Left ventricle myocardium inferior (tissue), 1 donor: ENCODE measurements at regions of chr10 and their contacts with region 1.

Region 1: DNA sequence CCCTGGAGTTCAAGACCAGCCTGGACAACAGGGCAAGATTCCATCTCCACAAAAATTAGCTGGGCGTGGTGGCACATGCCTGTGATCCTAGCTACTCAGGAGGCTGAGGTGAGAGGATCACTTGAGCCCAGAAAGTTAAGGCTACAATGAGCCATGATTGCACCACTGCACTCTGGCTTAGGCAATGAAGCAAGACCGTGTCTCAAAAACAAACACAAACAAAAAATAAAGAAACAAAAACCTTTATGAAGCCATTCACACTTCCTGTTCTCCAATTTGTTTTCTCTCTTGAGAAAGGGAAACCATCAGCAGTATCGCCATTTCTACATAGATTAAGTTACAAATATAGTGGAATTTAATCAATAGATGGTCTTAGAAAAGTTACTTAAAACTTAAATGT is 19.8 kb downstream of the YME1L1 start:
- DNase-seq: no peak
- H3K4me3 ChIP-seq: no peak overlapping the region
- H3K27ac ChIP-seq: no peak overlapping the region
- H3K4me1 ChIP-seq: no peaks in the 10 kb centered on the region
- H3K27me3 ChIP-seq: no peaks in the 10 kb centered on the region
- CTCF ChIP-seq: no peak

Region 2: GRCh38 chr10:26743091-26743490 is 391.3 kb before region 1 on chr10:
- intact Hi-C with region 1: loop called (anchors 10 kb)
- DNase-seq: no peak
- H3K4me3 ChIP-seq: no peak overlapping the region
- H3K27ac ChIP-seq: no peak overlapping the region
- H3K4me1 ChIP-seq: no peaks in the 10 kb centered on the region
- H3K27me3 ChIP-seq: no peaks in the 10 kb centered on the region
- CTCF ChIP-seq: no peak